ENCODE measurements at regions of chr15 and their contacts with region 1.

Region 1: GRCh38 chr15:49620658-49621368 is at the starts of genes DTWD1 and FAM227B:
- DNase-seq: peak; percentile 92 to 96 (median 93)
- H3K4me3 ChIP-seq: peak within 1 kb of the TSS; percentile 80 to 92
- H3K4me3 Mint-ChIP-seq: peak within 1 kb of the TSS; percentile 95 to 99 (median 98)
- H3K27ac ChIP-seq: peak within 1 kb of the TSS; percentile 71
- H3K27ac Mint-ChIP-seq: peak within 1 kb of the TSS; percentile 98 to 99 (median 99)
- H3K4me1 ChIP-seq: peaks cover 22% of the 10 kb centered on the region
- H3K4me1 Mint-ChIP-seq: peaks cover 25 to 51% (median 37%) of the 10 kb centered on the region in 4 donors
- H3K27me3 ChIP-seq: no peaks in the 10 kb centered on the region
- H3K27me3 Mint-ChIP-seq: no peaks in the 10 kb centered on the region
- total RNA-seq, gene DTWD1: 28.7 to 29.9 TPM
- total RNA-seq, gene FAM227B: 11.5 to 13.6 TPM

Region 2: DNA sequence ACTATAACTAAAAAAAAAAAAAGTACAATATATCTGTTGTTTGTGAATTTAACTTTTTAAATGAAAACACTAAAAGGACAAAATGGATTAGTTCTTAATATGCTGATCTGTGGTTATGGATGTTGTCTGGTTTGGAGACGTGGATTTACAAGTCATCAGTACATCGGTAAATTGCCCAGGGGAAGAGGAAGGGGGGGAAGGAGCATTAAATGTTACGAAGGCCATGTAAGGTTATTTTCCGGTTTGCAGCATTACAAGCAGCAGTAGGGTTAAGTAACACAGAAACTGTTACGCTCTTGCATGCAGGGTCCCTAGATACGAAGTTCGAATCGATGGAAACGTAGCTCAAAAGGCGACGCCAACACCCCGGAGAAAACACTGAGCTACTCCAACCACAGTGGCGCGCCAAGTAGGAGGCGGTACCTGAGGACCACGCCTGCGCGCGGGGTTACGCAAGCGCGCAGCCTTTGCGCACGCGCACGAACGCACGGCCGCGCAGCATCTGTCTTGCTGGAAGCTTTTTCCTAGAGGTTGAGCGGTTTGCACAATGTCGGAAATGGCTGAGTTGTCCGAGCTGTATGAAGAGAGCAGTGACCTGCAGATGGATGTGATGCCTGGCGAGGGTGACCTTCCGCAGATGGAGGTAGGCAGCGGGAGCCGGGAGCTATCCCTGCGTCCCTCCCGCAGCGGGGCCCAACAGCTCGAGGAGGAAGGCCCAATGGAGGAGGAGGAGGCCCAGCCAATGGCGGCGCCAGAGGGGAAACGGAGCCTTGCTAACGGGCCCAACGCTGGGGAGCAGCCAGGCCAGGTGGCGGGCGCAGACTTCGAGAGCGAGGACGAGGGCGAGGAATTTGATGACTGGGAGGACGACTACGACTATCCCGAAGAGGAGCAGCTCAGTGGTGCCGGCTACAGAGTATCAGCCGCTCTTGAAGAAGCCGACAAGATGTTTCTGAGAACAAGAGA is 742.9 kb before region 1 on chr15 and contains the start of gene EID1:
- CTCF ChIA-PET with region 1: no interaction called
- POLR2A ChIA-PET with region 1: interaction called, 25 read pairs
- intact Hi-C with region 1: no loop called
- DNase-seq: peak; percentile 93 to 95 (median 94)
- H3K4me3 ChIP-seq: peak within 1 kb of the TSS; percentile 74 to 96
- H3K4me3 Mint-ChIP-seq: peak within 1 kb of the TSS; percentile 96 to 100 (median 98)
- H3K27ac ChIP-seq: peak within 1 kb of the TSS; percentile 71
- H3K27ac Mint-ChIP-seq: peak within 1 kb of the TSS; percentile 97 to 100 (median 99)
- H3K4me1 ChIP-seq: peaks cover 26% of the 10 kb centered on the region
- H3K4me1 Mint-ChIP-seq: peaks cover 18 to 31% (median 24%) of the 10 kb centered on the region in 4 donors
- H3K27me3 ChIP-seq: no peaks in the 10 kb centered on the region
- H3K27me3 Mint-ChIP-seq: peaks cover 3 to 4% of the 10 kb centered on the region in 2 donors
- total RNA-seq, gene EID1: 76.0 to 91.2 TPM

Region 3: GRCh38 chr15:50424066-50424890 is 803.5 kb after region 1 on chr15 and contains the start of gene USP8:
- CTCF ChIA-PET with region 1: no interaction called
- POLR2A ChIA-PET with region 1: interaction called, 3 read pairs
- intact Hi-C with region 1: loop called (anchors 1 kb)
- DNase-seq: peak; percentile 90 to 93 (median 92)
- H3K4me3 ChIP-seq: peak within 1 kb of the TSS; percentile 99
- H3K4me3 Mint-ChIP-seq: peak within 1 kb of the TSS; percentile 96 to 100 (median 98)
- H3K27ac ChIP-seq: peak within 1 kb of the TSS; percentile 94
- H3K27ac Mint-ChIP-seq: peak within 1 kb of the TSS; percentile 98 to 100 (median 99)
- H3K4me1 ChIP-seq: peaks cover 32% of the 10 kb centered on the region
- H3K4me1 Mint-ChIP-seq: peaks cover 13 to 53% (median 32%) of the 10 kb centered on the region in 4 donors
- H3K27me3 ChIP-seq: no peaks in the 10 kb centered on the region
- H3K27me3 Mint-ChIP-seq: no peaks in the 10 kb centered on the region
- total RNA-seq, gene USP8: 68.9 to 70.9 TPM

Region 4: DNA sequence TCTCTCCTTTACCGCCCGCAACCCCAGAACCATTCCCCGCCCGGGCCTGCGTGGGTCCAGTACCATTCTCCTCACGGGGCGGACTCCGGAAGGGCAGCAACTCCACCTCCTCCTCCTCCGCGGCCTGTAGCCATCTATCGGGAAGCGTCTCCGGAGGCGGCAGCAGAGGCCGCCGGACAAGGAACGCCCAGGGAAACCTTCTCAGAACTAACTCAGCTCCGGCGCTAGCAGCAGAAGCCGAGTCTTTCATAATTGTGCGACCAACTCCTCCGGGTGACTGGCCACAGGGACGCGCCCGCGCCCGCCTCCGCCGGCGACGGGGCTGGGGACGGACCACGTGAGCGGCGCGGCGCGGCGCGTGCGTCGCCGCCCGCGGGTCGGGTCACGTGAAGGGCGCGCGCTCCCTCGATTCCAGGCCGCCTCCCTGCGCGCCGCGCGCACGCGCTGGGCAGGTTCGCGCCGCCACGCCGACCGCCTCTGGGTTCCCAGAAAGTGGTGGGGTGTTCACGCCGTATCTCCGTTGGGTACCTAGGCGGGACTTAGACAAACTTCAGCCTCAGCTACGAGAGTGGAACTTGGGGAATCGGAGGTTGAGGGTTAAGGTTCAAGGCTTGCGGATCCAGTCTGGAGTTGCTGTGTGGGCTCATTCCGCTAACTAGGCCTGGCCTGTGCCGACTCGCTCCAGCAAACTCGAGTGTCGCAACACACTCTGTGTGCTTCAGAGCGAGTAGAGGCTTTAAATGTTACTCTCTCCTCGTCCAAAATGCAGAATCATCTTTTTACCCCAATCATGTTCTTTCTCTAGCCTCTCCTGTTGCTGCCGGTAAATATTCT is 1065.9 kb after region 1 on chr15 and contains the start of gene TRPM7:
- CTCF ChIA-PET with region 1: no interaction called
- POLR2A ChIA-PET with region 1: no interaction called
- intact Hi-C with region 1: loop called (anchors 2 kb)
- DNase-seq: peak; percentile 86 to 90 (median 90)
- H3K4me3 ChIP-seq: peak within 1 kb of the TSS; percentile 89 to 99
- H3K4me3 Mint-ChIP-seq: peak within 1 kb of the TSS; percentile 98 to 100 (median 99)
- H3K27ac ChIP-seq: peak within 1 kb of the TSS; percentile 99
- H3K27ac Mint-ChIP-seq: peak within 1 kb of the TSS; percentile 98 to 100 (median 99)
- H3K4me1 ChIP-seq: peaks cover 52% of the 10 kb centered on the region
- H3K4me1 Mint-ChIP-seq: peaks cover 32 to 61% (median 45%) of the 10 kb centered on the region in 4 donors
- H3K27me3 ChIP-seq: no peaks in the 10 kb centered on the region
- H3K27me3 Mint-ChIP-seq: no peaks in the 10 kb centered on the region
- total RNA-seq, gene TRPM7: 65.3 to 66.7 TPM

Region 5: DNA sequence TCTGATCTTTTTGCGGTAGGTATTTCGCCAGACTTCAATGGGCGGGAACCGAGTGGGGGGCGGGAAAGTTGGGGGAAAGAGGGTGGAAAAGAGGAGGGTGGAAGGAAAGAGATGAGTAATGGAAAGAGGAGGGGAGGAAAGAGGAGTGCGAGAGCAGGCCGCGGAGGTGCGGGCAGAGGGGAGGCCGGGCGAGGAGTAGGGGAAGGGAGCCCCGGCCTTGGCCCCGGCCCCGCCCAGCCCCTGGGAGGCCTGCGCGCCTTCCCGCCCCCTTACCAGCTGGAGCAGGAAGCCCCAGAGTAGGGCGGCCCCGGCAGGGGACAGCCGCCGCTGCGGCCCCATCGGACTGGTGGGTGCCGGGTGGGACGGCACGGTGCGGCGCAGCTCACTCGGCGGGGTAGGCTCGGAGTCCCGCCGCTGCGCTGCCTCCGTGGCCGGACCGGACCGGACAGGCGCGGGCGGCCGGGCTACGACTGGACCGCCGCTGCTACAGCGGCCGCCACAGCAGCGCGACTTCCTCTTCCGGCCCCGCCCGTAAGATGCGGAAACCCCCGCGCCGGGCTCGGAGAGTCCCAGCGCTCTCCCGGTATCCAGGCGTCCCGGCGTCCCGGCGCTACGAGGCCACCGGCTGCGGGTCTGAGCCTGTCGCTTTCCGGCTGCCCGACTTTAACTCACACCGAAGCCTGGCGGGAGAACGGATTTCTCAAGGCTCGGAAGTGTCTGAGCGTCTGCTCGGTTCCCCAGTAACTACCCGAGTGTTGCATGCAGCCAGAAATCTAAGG is 1144.6 kb after region 1 on chr15 and contains the start of gene SPPL2A:
- CTCF ChIA-PET with region 1: no interaction called
- POLR2A ChIA-PET with region 1: no interaction called
- intact Hi-C with region 1: loop called (anchors 10 kb)
- DNase-seq: peak; percentile 71 to 84 (median 73)
- H3K4me3 ChIP-seq: peak within 1 kb of the TSS; percentile 85 to 91
- H3K4me3 Mint-ChIP-seq: peak within 1 kb of the TSS; percentile 87 to 97 (median 94)
- H3K27ac ChIP-seq: peak within 1 kb of the TSS; percentile 93
- H3K27ac Mint-ChIP-seq: peak within 1 kb of the TSS; percentile 94 to 98 (median 97)
- H3K4me1 ChIP-seq: peaks cover 24% of the 10 kb centered on the region
- H3K4me1 Mint-ChIP-seq: peaks cover 31 to 54% (median 44%) of the 10 kb centered on the region in 4 donors
- H3K27me3 ChIP-seq: no peaks in the 10 kb centered on the region
- H3K27me3 Mint-ChIP-seq: no peaks in the 10 kb centered on the region
- total RNA-seq, gene SPPL2A: 75.2 to 80.3 TPM